ENCODE measurements at regions of chr20 and their contacts with region 1.

Region 1: GRCh38 chr20:33443512-33444239 is at the start of gene SNTA1:
- DNase-seq: peak; percentile 83
- ATAC-seq: peak; percentile 89
- H3K4me3 ChIP-seq: peak within 1 kb of the TSS; percentile 84
- H3K27ac ChIP-seq: no peak within 1 kb of the TSS
- H3K4me1 ChIP-seq: peaks cover 5% of the 10 kb centered on the region; the same call in 1 of the 2 replicates
- H3K27me3 ChIP-seq: no peaks in the 10 kb centered on the region
- CTCF ChIP-seq: no peak
- total RNA-seq, gene SNTA1: 25.9 and 29.4 TPM in 2 replicates

Region 2: GRCh38 chr20:33359462-33359861 is 84.2 kb before region 1 on chr20:
- CTCF ChIA-PET with region 1: no interaction called
- POLR2A ChIA-PET with region 1: no interaction called
- intact Hi-C with region 1: no loop called
- DNase-seq: no peak
- ATAC-seq: no peak
- H3K4me3 ChIP-seq: no peak overlapping the region
- H3K27ac ChIP-seq: no peak overlapping the region
- H3K4me1 ChIP-seq: no peaks in the 10 kb centered on the region
- H3K27me3 ChIP-seq: no peaks in the 10 kb centered on the region
- CTCF ChIP-seq: no peak

Region 3: DNA sequence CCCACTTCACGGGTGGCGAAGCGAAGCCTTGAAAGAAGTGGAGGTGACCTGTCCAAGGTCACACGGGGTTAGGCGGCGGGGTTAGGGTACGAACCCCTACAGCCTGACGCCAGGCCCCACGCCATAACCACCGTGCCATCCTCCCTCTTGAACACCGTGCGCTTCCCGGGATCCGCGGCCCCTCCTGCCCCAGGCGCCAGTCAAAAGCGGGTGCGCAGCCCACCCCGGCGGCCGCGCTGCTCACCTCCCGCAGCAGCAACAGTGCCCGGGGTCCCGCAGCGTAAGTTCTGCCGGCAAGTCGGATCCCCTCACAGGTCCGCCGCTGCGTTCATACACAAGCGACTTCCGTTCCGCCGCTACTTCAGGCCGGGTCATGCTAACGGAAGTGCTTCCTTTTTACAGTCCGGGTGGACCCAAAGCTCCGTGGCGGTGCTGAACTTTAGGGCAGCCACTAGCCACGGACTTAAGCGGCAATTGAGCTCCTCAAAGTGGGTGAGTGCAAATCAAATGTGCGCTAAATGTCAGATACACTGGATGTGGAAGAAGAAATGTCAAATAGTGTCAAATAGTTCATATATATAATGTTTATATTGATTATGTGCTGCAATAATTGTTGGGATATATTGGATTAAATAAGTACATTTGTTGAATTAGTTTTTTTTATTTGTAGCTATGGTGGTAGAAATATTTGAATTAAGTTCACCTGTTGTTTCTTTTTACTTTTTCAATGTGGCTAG is 42.3 kb before region 1 on chr20 and contains the start of gene CDK5RAP1:
- CTCF ChIA-PET with region 1: interaction called, 5 read pairs
- POLR2A ChIA-PET with region 1: no interaction called
- intact Hi-C with region 1: loop called (anchors 1 kb)
- DNase-seq: peak; percentile 92
- ATAC-seq: peak; percentile 94
- H3K4me3 ChIP-seq: peak within 1 kb of the TSS; percentile 93
- H3K27ac ChIP-seq: no peak within 1 kb of the TSS
- H3K4me1 ChIP-seq: peaks cover 9% of the 10 kb centered on the region
- H3K27me3 ChIP-seq: no peaks in the 10 kb centered on the region
- CTCF ChIP-seq: no peak
- total RNA-seq, gene CDK5RAP1: 31.2 and 53.4 TPM in 2 replicates

Region 4: DNA sequence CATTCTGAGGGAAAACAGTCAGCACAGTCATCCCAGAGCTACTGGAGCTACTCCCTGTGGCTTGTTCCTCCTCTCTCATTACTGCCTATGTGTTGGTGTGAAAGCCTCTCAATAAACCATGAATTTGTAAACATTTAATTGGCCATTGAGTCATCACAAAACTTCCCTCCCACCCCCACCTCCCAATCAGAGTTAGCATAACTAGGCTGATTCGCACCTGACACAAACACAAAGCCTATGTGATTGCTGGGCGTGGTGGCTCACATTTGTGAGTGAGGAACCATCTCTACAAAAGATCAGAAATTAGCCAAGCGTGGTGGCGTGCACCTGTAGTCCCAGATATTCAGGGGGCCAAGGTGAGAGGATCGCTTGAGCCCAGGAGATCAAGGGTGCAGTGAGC is 17.0 kb after region 1 on chr20:
- CTCF ChIA-PET with region 1: no interaction called
- POLR2A ChIA-PET with region 1: no interaction called
- intact Hi-C with region 1: no loop called
- DNase-seq: no peak
- ATAC-seq: peak; percentile 8; the same call in 1 of the 2 replicates
- H3K4me3 ChIP-seq: no peak overlapping the region
- H3K27ac ChIP-seq: no peak overlapping the region
- H3K4me1 ChIP-seq: no peaks in the 10 kb centered on the region
- H3K27me3 ChIP-seq: no peaks in the 10 kb centered on the region
- CTCF ChIP-seq: no peak

Measured in PC-3 (cell line).